Body of pancreas (tissue), 4 donors: ENCODE measurements at regions of chr14 and their contacts with region 1.

Region 1: GRCh38 chr14:99320105-99320572 is 48.1 kb upstream of the BCL11B start:
- DNase-seq: peak; percentile 36 to 71 (median 50)
- ATAC-seq: no peak
- H3K4me3 ChIP-seq: no peak overlapping the region
- H3K27ac ChIP-seq: no peak overlapping the region
- H3K4me1 ChIP-seq: peaks cover 10% of the 10 kb centered on the region
- H3K27me3 ChIP-seq: no peaks in the 10 kb centered on the region
- CTCF ChIP-seq: peak; percentile 51 to 77 (median 58)
- POLR2A ChIP-seq: no peak

Region 2: GRCh38 chr14:98871796-98872195 is 448.3 kb before region 1 on chr14:
- intact Hi-C with region 1: no loop called
- DNase-seq: peak; percentile 34 to 64 (median 58)
- ATAC-seq: peak; percentile 33
- H3K4me3 ChIP-seq: no peak overlapping the region
- H3K27ac ChIP-seq: no peak overlapping the region
- H3K4me1 ChIP-seq: no peaks in the 10 kb centered on the region
- H3K27me3 ChIP-seq: no peaks in the 10 kb centered on the region
- CTCF ChIP-seq: no peak
- POLR2A ChIP-seq: no peak

Region 3: DNA sequence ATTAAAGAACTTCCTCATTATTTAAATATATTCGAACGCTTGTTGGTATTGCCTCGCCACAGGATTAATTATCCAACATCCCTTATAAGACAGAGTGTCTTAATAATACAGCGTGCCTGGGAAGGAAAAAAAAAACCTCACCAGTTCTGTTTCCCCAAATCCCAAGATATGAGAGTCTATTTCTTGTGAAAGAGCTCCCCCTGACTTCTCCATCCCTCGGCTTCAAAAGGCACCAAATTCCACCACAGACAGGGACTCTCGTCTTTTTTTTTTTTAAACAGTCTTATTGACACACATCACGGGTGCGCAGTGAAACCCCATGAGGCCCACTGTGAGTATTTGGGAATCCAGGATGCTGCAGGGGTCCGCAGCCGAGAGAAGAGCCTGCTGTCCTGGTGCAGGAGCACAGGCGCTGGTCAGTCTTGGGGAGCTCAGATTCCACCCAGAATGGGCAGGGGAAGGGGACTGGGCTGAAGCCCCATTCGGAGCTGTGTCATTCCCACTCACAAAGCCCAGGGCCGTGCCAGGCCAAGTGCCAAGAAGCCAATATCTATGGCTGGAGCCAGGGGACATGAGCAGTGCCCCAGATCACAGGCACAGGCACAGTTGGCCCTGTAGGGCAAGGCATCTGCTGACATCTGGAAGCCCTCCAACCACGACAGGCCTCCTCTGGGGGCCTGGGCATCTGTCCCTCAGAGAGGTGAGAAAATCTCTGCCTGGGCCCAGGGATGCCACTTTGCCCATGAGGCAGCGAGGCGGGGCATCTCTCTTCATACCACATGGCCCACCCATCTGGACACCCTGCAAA is 120.1 kb before region 1 on chr14:
- intact Hi-C with region 1: no loop called
- DNase-seq: no peak
- ATAC-seq: no peak
- H3K4me3 ChIP-seq: no peak overlapping the region
- H3K27ac ChIP-seq: no peak overlapping the region
- H3K4me1 ChIP-seq: peaks cover 5% of the 10 kb centered on the region
- H3K27me3 ChIP-seq: no peaks in the 10 kb centered on the region
- CTCF ChIP-seq: peak in 1 of 7 experiments; percentile 10
- POLR2A ChIP-seq: no peak

Region 4: GRCh38 chr14:99395909-99396530 is 75.9 kb after region 1 on chr14:
- intact Hi-C with region 1: no loop called
- DNase-seq: peak in 1 of 4 donors; percentile 32
- ATAC-seq: no peak
- H3K4me3 ChIP-seq: no peak overlapping the region
- H3K27ac ChIP-seq: no peak overlapping the region
- H3K4me1 ChIP-seq: peaks cover 4% of the 10 kb centered on the region
- H3K27me3 ChIP-seq: no peaks in the 10 kb centered on the region
- CTCF ChIP-seq: no peak
- POLR2A ChIP-seq: no peak

Region 5: DNA sequence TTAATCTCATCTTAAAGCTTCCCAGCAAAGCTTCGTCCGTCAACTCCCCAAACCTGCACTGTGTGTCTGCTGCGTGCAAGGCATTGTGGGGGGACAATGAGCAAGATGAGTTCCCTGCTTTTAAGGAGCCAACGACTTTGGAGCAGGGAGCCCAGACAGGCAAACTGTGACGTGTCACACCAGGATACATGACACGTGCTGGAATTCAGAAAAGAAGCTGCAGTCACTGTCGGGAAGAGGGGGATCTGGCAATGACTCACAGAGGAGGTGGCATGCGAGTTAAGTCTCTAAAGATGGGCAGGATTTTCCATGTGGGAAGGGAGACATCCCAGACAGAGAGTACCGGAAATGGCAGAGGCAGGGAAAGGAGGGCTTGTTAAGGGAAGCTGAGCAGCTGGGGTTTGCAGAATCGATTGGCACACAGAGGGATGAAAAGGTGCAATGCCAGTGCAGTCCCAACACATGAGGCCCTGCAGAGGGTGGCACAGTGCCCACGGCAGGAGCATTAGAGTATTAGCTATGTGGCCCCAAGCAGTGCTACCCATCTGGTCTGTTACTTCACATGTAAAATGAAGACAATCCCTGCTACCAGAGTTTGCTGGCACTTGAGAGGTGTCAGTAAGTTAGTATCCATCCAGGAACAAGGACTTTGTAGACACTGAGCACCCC is 107.6 kb after region 1 on chr14:
- intact Hi-C with region 1: loop called (anchors 10 kb)
- DNase-seq: peak in 1 of 4 donors; percentile 50
- ATAC-seq: no peak
- H3K4me3 ChIP-seq: no peak overlapping the region
- H3K27ac ChIP-seq: no peak overlapping the region
- H3K4me1 ChIP-seq: peaks cover 20% of the 10 kb centered on the region
- H3K27me3 ChIP-seq: no peaks in the 10 kb centered on the region
- CTCF ChIP-seq: no peak
- POLR2A ChIP-seq: no peak

Region 6: DNA sequence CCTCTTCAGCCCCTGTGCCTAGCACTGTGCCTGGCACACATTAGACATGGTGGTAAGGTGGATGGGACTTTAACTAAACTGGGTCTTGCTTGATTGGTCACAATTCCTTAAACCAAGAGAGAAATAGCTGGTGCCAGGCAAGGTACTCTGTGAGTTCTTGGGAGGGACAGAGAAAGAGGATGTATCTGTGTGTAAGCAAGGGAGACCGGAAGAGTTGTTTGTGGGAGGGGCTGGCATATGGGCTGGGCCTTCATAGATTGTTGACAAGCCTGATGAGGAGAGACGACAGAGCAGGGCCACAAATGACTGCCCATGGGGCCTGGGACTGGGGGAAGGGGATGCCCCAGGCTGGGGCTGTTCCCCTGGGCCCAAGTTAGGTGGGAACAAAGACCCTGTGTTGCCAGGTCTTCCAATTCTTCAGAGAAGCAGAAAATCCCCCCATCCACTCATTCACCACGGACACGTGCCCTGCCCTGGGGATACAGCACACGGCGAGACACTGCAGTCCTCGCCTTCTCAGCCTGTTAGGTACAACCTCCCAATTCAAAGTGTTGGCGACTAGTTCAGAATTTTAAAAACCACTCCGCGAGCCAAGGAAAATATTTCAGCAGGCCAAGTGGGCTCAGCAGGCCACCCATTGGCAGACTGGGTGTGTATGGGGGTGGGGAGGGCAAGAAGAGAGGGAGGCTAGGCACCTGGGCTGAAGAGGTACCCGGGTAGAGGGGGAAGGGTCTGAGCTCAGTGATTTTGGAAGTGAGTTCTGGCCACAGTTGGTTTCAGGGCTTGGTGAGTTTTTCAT is 352.6 kb after region 1 on chr14:
- intact Hi-C with region 1: no loop called
- DNase-seq: no peak
- ATAC-seq: no peak
- H3K4me3 ChIP-seq: no peak overlapping the region
- H3K27ac ChIP-seq: no peak overlapping the region
- H3K4me1 ChIP-seq: no peaks in the 10 kb centered on the region
- H3K27me3 ChIP-seq: no peaks in the 10 kb centered on the region
- CTCF ChIP-seq: no peak
- POLR2A ChIP-seq: no peak